ENCODE measurements at regions of chr15 and their contacts with region 1.

Region 1: GRCh38 chr15:98779463-98780071 is 131.2 kb downstream of the IGF1R start:
- DNase-seq: peak; percentile 60
- H3K4me3 ChIP-seq: no peak overlapping the region
- H3K27ac ChIP-seq: peak overlapping the region; percentile 40 to 65
- H3K4me1 ChIP-seq: peaks cover 24% of the 10 kb centered on the region
- H3K27me3 ChIP-seq: no peaks in the 10 kb centered on the region
- CTCF ChIP-seq: peak; percentile 62 to 90 (median 76)
- POLR2A ChIP-seq: no peak

Region 2: GRCh38 chr15:98525661-98526001 is 253.9 kb before region 1 on chr15:
- intact Hi-C with region 1: loop called (anchors 10 kb)
- DNase-seq: no peak
- H3K4me3 ChIP-seq: no peak overlapping the region
- H3K27ac ChIP-seq: no peak overlapping the region
- H3K4me1 ChIP-seq: no peaks in the 10 kb centered on the region
- H3K27me3 ChIP-seq: no peaks in the 10 kb centered on the region
- CTCF ChIP-seq: no peak
- POLR2A ChIP-seq: no peak